ENCODE measurements at regions of chr10 and their contacts with region 1.

Region 1: DNA sequence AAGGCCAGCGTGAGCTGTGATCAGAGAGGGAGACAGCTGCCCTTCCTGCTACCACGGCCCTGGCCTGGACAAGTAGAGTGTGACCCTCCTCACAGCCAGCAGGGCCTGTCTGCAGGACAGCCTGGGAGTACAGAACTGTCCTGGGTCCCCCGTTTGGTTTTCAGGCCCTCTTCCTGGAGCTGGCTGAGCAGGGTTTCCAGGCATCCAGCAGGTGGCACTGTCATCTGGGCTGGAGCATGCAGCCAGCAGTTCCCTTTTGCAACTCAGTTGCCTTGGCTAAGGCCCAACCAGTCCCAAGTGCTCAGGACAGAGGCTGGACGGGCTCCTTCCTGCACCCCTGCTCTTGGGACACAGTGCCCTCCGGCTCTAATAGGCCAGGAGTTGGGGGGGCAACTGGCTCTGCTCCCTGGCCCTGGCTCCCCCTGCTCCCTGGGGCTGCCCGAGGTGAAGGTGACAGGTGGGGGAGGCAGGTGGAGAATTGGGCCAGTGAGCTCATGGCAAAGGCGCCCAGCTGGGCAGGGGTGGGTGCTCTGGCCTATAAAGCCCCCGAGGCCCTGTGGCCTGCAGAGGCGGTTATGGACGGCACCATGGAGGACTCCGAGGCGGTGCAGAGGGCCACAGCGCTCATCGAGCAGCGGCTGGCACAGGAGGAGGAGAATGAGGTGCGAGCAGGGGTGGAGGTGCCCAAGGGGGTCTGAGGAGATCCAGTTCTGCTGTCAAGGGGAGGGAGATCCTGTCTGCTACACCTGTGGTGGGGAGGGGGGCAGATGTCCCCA is at the start of gene ANKRD2:
- DNase-seq: no peak
- ATAC-seq: peak; percentile 97
- H3K4me3 ChIP-seq: no peak within 1 kb of the TSS
- H3K27ac ChIP-seq: no peak within 1 kb of the TSS
- H3K4me1 ChIP-seq: no peaks in the 10 kb centered on the region
- H3K27me3 ChIP-seq: no peaks in the 10 kb centered on the region
- CTCF ChIP-seq: peak; percentile 89 to 95 (median 94)
- EP300 ChIP-seq: no peak
- POLR2A ChIP-seq: no peak
- RAD21 ChIP-seq: peak; percentile 73
- polyA plus RNA-seq, gene ANKRD2: not detected

Region 2: DNA sequence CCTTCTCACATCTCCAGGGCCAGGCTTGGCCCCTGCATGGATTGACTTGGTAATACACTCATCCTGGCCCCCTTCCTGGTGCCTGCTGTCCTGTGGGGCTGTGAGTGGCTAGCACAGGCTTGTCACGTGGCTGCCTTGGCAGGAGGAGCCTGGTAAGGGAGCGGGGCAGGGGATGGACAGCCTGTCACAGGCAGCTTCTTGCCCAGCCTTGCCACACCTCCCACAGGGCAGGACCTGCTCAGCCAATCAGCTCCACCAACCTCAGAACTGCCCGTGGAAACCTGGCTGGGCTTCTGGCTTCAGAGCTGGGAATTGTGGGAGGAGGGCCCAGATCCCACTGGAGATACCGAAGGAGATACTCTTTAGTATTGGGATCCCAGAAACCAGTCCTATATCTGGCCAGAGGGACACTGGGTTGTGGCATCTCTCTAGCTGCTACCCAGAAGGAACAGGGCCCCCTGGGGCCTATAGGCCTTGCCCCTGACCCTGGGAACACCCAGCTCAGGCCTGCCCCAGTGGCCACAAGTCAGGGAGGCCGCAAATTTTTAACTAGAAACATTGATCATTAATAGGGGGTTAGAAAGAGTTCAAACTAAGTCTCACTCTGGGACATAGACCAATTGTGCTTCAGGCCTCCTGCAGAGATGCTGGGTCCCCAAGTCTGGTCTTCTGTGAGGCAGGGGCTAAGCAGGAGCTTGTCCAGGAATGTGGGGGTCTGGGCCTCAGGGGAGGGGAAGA is 11.8 kb after region 1 on chr10 and contains the start of gene HOGA1:
- CTCF ChIA-PET with region 1: interaction called, 29 read pairs
- POLR2A ChIA-PET with region 1: interaction called, 3 read pairs
- RAD21 ChIA-PET with region 1: interaction called, 4 read pairs
- SMC1A ChIA-PET with region 1: interaction called, 7 read pairs
- in situ Hi-C with region 1: no loop called
- intact Hi-C with region 1: no loop called
- DNase-seq: no peak
- ATAC-seq: peak; percentile 97
- H3K4me3 ChIP-seq: no peak within 1 kb of the TSS
- H3K27ac ChIP-seq: no peak within 1 kb of the TSS
- H3K4me1 ChIP-seq: no peaks in the 10 kb centered on the region
- H3K27me3 ChIP-seq: no peaks in the 10 kb centered on the region
- CTCF ChIP-seq: no peak
- EP300 ChIP-seq: no peak
- POLR2A ChIP-seq: no peak
- RAD21 ChIP-seq: no peak
- polyA plus RNA-seq, gene HOGA1: 0.06 TPM in 1 of 2 experiments, not detected in the other

Region 3: DNA sequence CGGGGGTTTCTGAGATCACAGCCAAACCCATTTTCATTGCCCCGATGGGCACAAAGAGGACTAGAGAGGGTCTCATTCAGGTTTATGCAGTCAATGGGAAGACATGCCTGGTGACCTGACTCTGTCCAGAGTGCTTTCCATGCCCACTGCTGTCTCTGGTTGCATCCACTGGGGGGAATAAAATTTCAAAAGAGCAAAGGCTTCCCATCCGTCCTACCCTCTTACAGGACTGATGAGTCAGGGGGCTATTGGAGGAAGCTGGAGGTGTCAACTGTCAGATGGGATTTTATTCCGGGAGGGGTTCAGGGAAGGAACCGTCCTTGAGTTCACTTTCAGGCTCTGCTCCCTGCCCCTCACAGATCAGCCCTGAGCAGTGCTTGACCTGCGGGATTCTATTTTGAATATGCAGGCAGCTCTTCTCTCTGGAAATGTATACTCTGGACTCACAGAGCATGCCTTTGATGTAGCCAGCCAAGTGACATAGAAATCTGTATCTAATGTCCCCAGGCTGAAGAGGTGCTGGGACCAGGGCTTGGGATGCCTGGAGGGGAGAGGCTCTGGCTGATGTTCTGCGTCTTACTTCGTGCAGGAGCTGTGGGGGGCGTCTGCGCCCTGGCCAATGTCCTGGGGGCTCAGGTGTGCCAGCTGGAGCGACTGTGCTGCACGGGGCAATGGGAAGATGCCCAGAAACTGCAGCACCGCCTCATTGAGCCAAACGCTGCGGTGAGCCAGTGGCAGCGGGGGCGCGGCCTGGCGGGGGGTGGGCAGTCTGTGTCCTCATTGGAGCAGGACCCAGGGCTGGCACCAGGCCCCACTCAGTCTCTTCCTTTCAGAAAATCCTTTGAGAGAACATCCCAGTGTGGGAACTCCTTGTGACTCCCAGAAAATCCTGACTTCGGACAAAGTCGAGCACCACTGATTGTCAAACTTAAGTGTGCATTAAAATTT is 29.1 kb after region 1 on chr10:
- CTCF ChIA-PET with region 1: interaction called, 11 read pairs
- POLR2A ChIA-PET with region 1: no interaction called
- RAD21 ChIA-PET with region 1: no interaction called
- SMC1A ChIA-PET with region 1: no interaction called
- in situ Hi-C with region 1: no loop called
- intact Hi-C with region 1: no loop called
- DNase-seq: no peak
- ATAC-seq: no peak
- H3K4me3 ChIP-seq: no peak overlapping the region
- H3K27ac ChIP-seq: no peak overlapping the region
- H3K4me1 ChIP-seq: no peaks in the 10 kb centered on the region
- H3K27me3 ChIP-seq: no peaks in the 10 kb centered on the region; a peak in 1 of 4 replicates
- CTCF ChIP-seq: no peak
- EP300 ChIP-seq: no peak
- POLR2A ChIP-seq: no peak
- RAD21 ChIP-seq: no peak

Region 4: DNA sequence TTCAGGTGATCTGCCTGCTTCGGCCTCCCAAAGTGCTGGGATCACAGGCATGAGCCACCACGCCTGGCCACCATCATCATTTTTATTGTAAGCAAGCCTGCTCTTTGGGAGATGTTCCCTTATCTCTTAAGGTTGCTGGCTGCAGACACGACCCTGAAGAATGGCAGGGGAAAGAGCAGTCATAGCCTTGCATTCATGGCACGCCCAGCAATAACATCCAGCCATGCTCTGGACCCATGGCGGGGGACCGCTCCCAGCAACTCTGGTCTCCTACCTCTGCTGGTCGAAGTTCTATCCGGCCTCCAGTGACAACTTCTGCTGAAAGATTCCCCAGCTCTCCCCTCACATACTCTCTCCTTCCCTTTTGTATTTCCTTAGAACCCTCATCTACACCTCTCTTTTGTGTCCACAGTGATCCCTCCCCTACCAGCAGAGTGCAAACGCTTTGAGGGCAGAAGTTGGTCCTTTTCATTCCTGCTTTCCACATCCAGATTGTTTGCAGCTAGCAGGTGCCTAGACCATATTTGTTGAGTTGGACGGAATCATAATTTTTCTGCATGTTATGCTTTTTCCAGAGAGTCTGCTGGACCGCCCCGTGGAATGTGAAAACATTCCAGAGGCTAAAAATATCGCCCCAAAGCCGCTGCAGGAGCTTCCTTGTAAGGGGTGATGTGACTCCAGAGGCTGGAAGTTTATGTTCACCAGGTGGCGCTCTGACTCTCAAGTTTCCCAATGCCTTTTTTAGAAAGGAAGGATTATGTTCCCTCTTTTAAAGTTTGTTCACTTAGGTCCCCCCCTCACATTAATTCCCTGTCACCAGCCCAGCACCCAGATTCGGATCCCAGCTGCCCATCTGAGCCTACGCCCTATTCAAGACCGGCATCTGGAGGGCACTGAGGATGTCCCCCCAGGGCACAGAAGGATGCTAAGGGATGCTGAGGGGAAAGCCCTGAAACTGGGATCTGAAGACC is 136.9 kb after region 1 on chr10:
- CTCF ChIA-PET with region 1: no interaction called
- POLR2A ChIA-PET with region 1: no interaction called
- RAD21 ChIA-PET with region 1: no interaction called
- SMC1A ChIA-PET with region 1: no interaction called
- in situ Hi-C with region 1: no loop called
- intact Hi-C with region 1: no loop called
- DNase-seq: no peak
- ATAC-seq: no peak; the same call in 2 of the 3 replicates
- H3K4me3 ChIP-seq: no peak overlapping the region
- H3K27ac ChIP-seq: no peak overlapping the region
- H3K4me1 ChIP-seq: peaks cover 3% of the 10 kb centered on the region; the same call in 1 of the 2 replicates
- H3K27me3 ChIP-seq: no peaks in the 10 kb centered on the region
- CTCF ChIP-seq: peak; percentile 52 to 65 (median 60)
- EP300 ChIP-seq: no peak
- POLR2A ChIP-seq: no peak
- RAD21 ChIP-seq: peak; percentile 53

Measured in GM12878 (cell line).